CD4-positive, alpha-beta memory T cell (primary cell): ENCODE measurements at regions of chr4 and their contacts with region 1.

Region 1: GRCh38 chr4:4386736-4387392 is at the start of gene NSG1:
- DNase-seq: peak; percentile 40 to 66 (median 45)
- H3K4me3 ChIP-seq: peak within 1 kb of the TSS; percentile 47 to 54
- H3K4me3 Mint-ChIP-seq: peak within 1 kb of the TSS; percentile 85 to 96 (median 90)
- H3K27ac ChIP-seq: peak within 1 kb of the TSS; percentile 15
- H3K27ac Mint-ChIP-seq: peak within 1 kb of the TSS; percentile 35 to 78 (median 76)
- H3K4me1 ChIP-seq: peaks cover 19% of the 10 kb centered on the region
- H3K4me1 Mint-ChIP-seq: peaks cover 11 to 30% (median 18%) of the 10 kb centered on the region in 4 donors
- H3K27me3 ChIP-seq: no peaks in the 10 kb centered on the region
- H3K27me3 Mint-ChIP-seq: peaks cover 0 to 4% of the 10 kb centered on the region in 2 donors
- total RNA-seq, gene NSG1: 74.9 to 75.1 TPM

Region 2: GRCh38 chr4:4344915-4345527 is 41.8 kb before region 1 on chr4:
- CTCF ChIA-PET with region 1: no interaction called
- POLR2A ChIA-PET with region 1: interaction called, 15 read pairs
- intact Hi-C with region 1: loop called (anchors 1 kb)
- DNase-seq: no peak
- H3K4me3 ChIP-seq: no peak overlapping the region
- H3K4me3 Mint-ChIP-seq: no peak overlapping the region
- H3K27ac ChIP-seq: no peak overlapping the region
- H3K27ac Mint-ChIP-seq: peak overlapping the region in 1 of 7 donors; percentile 70
- H3K4me1 ChIP-seq: peaks cover 21% of the 10 kb centered on the region
- H3K4me1 Mint-ChIP-seq: peaks cover 6 to 33% (median 27%) of the 10 kb centered on the region in 4 donors
- H3K27me3 ChIP-seq: no peaks in the 10 kb centered on the region
- H3K27me3 Mint-ChIP-seq: no peaks in the 10 kb centered on the region

Region 3: GRCh38 chr4:4362991-4363697 is 23.7 kb before region 1 on chr4:
- CTCF ChIA-PET with region 1: no interaction called
- POLR2A ChIA-PET with region 1: no interaction called
- intact Hi-C with region 1: no loop called
- DNase-seq: no peak
- H3K4me3 ChIP-seq: no peak overlapping the region
- H3K4me3 Mint-ChIP-seq: no peak overlapping the region
- H3K27ac ChIP-seq: no peak overlapping the region
- H3K27ac Mint-ChIP-seq: no peak overlapping the region
- H3K4me1 ChIP-seq: no peaks in the 10 kb centered on the region
- H3K4me1 Mint-ChIP-seq: no peaks in the 10 kb centered on the region
- H3K27me3 ChIP-seq: no peaks in the 10 kb centered on the region
- H3K27me3 Mint-ChIP-seq: peaks cover 8 to 9% of the 10 kb centered on the region in 2 donors

Region 4: DNA sequence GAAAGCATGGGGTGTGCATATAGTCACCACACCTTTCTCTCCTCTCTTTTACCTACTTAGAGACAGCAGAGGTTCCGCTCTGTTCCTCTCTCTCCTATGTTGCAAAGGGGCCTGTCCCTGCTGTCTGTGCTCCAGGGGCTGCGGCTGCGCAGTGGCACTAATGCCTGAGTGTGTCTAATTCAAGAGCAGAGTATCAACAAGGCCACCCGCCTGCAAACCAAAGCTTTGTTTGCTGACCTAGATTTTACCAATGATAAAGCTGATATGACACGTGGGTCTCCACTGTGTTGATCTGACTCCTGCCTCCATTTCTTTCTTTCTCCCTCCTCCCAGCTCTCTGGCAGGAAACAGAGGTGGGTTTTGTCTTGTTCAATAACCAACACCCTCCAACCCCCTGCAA is 75.0 kb after region 1 on chr4:
- CTCF ChIA-PET with region 1: no interaction called
- POLR2A ChIA-PET with region 1: interaction called, 10 read pairs
- intact Hi-C with region 1: loop called (anchors 1 kb)
- DNase-seq: peak; percentile 73 to 91 (median 87)
- H3K4me3 ChIP-seq: no peak overlapping the region
- H3K4me3 Mint-ChIP-seq: peak overlapping the region; percentile 73 to 91 (median 82)
- H3K27ac ChIP-seq: peak overlapping the region; percentile 52
- H3K27ac Mint-ChIP-seq: peak overlapping the region; percentile 92 to 99 (median 95)
- H3K4me1 ChIP-seq: peaks cover 48% of the 10 kb centered on the region
- H3K4me1 Mint-ChIP-seq: peaks cover 34 to 65% (median 51%) of the 10 kb centered on the region in 4 donors
- H3K27me3 ChIP-seq: no peaks in the 10 kb centered on the region
- H3K27me3 Mint-ChIP-seq: no peaks in the 10 kb centered on the region

Region 5: GRCh38 chr4:5785806-5786680 is 1399.2 kb after region 1 on chr4:
- CTCF ChIA-PET with region 1: no interaction called
- POLR2A ChIA-PET with region 1: no interaction called
- intact Hi-C with region 1: no loop called
- DNase-seq: no peak
- H3K4me3 ChIP-seq: no peak overlapping the region
- H3K4me3 Mint-ChIP-seq: no peak overlapping the region
- H3K27ac ChIP-seq: no peak overlapping the region
- H3K27ac Mint-ChIP-seq: no peak overlapping the region
- H3K4me1 ChIP-seq: no peaks in the 10 kb centered on the region
- H3K4me1 Mint-ChIP-seq: no peaks in the 10 kb centered on the region
- H3K27me3 ChIP-seq: no peaks in the 10 kb centered on the region
- H3K27me3 Mint-ChIP-seq: peaks cover 0 to 2% of the 10 kb centered on the region in 2 donors